Naive thymus-derived CD4-positive, alpha-beta T cell (primary cell): ENCODE measurements at regions of chr2 and their contacts with region 1.

Region 1: GRCh38 chr2:162091325-162092007 is 17.5 kb upstream of the DPP4 start:
- DNase-seq: peak in 4 of 9 donors; percentile 9 to 21 (median 10)
- ATAC-seq: peak; percentile 41
- H3K4me3 ChIP-seq: no peak overlapping the region
- H3K4me3 Mint-ChIP-seq: no peak overlapping the region
- H3K27ac ChIP-seq: no peak overlapping the region
- H3K27ac Mint-ChIP-seq: peak overlapping the region in 2 of 9 donors; percentile 11 to 51
- H3K4me1 ChIP-seq: no peaks in the 10 kb centered on the region
- H3K4me1 Mint-ChIP-seq: peaks cover 7 to 22% (median 10%) of the 10 kb centered on the region in 7 donors
- H3K27me3 ChIP-seq: no peaks in the 10 kb centered on the region
- H3K27me3 Mint-ChIP-seq: no peaks in the 10 kb centered on the region

Region 2: DNA sequence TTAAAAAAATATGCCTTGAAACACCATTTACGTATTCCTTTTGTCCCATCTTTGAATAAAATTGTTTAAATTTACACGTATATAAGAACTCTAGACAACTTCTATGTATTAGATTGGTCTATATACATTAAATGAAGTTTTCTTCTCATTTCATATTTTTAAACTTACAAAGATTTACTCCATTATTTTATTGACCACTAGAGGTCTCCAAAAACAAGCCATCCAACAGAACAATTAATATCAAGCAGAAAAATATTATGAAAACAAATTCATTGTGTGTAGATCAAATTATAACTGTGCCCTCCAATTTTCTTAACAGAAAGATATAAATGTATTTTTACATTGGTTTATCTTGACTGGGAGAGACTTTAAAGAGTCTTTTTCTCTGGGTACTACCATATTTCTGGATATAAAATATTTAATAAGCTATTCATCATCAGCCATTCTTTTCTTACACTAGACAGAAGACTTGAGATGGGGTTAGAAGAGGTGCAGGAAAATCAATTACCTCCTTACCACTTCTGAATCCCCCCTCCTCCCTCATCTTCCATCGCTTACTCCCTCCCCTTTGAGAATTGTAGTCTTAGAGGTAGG is 83.9 kb before region 1 on chr2:
- CTCF ChIA-PET with region 1: interaction called, 3 read pairs
- POLR2A ChIA-PET with region 1: no interaction called
- intact Hi-C with region 1: loop called in 1 of 2 experiments (anchors 1 kb)
- DNase-seq: peak in 5 of 9 donors; percentile 32 to 54 (median 41)
- ATAC-seq: no peak
- H3K4me3 ChIP-seq: no peak overlapping the region
- H3K4me3 Mint-ChIP-seq: no peak overlapping the region
- H3K27ac ChIP-seq: no peak overlapping the region
- H3K27ac Mint-ChIP-seq: peak overlapping the region in 7 of 9 donors; percentile 23 to 86 (median 47)
- H3K4me1 ChIP-seq: peaks cover 18 to 40% of the 10 kb centered on the region in 2 donors
- H3K4me1 Mint-ChIP-seq: peaks cover 18 to 64% (median 52%) of the 10 kb centered on the region in 7 donors
- H3K27me3 ChIP-seq: no peaks in the 10 kb centered on the region
- H3K27me3 Mint-ChIP-seq: no peaks in the 10 kb centered on the region

Region 3: DNA sequence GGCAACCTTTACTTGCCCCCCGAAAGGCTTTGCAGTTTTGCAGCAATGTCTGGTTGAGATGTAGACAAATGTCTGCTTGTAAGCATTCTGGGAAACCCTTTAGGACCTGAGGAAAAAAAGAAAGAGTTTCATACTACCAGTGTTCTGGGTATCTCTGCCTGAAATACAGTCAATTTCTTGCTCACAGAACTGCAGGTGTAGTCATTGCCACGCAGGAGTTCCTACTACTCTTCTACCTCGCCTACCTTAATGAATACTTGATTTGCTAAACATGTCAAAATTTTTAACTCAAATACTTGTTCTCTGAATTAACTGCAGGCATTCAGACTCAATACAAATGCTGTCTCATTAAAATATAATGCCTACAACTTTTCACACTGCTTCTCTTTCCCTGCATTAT is 308.9 kb after region 1 on chr2:
- CTCF ChIA-PET with region 1: no interaction called
- POLR2A ChIA-PET with region 1: no interaction called
- intact Hi-C with region 1: no loop called
- DNase-seq: no peak
- ATAC-seq: no peak
- H3K4me3 ChIP-seq: no peak overlapping the region
- H3K4me3 Mint-ChIP-seq: no peak overlapping the region
- H3K27ac ChIP-seq: no peak overlapping the region
- H3K27ac Mint-ChIP-seq: no peak overlapping the region
- H3K4me1 ChIP-seq: no peaks in the 10 kb centered on the region
- H3K4me1 Mint-ChIP-seq: no peaks in the 10 kb centered on the region
- H3K27me3 ChIP-seq: no peaks in the 10 kb centered on the region
- H3K27me3 Mint-ChIP-seq: peaks cover 4 to 23% (median 12%) of the 10 kb centered on the region in 5 donors

Region 4: GRCh38 chr2:162506721-162507120 is 415.3 kb after region 1 on chr2:
- CTCF ChIA-PET with region 1: no interaction called
- POLR2A ChIA-PET with region 1: no interaction called
- intact Hi-C with region 1: no loop called
- DNase-seq: no peak
- ATAC-seq: no peak
- H3K4me3 ChIP-seq: no peak overlapping the region
- H3K4me3 Mint-ChIP-seq: no peak overlapping the region
- H3K27ac ChIP-seq: no peak overlapping the region
- H3K27ac Mint-ChIP-seq: no peak overlapping the region
- H3K4me1 ChIP-seq: no peaks in the 10 kb centered on the region
- H3K4me1 Mint-ChIP-seq: no peaks in the 10 kb centered on the region
- H3K27me3 ChIP-seq: no peaks in the 10 kb centered on the region
- H3K27me3 Mint-ChIP-seq: no peaks in the 10 kb centered on the region